ENCODE measurements at regions of chr10 and their contacts with region 1.

Region 1: DNA sequence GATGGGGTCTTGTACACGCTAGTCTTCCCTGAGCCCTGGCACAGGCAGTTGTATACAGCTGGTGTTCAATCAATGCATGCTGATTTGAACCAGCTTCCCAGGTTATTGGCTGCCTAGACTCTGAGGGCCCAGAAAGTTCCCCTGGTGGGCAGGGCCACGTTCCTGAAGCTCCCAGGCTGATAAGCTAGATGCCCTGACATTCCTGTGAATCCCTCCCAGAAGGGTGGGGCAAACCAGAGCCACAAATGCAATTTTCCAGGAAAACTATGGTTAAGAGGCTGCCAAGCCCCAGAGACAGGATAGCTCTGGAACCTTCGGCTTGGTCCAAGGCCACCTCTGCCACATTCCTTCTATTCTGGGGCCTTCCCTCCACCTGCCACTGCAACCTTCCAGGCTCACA is 78.2 kb downstream of the FAM53B start:
- DNase-seq: no peak
- H3K4me3 ChIP-seq: no peak overlapping the region
- H3K27ac ChIP-seq: no peak overlapping the region
- H3K4me1 ChIP-seq: peaks cover 0 to 7% (median 0%) of the 10 kb centered on the region in 4 experiments; a peak in 3 of 7 replicates
- H3K27me3 ChIP-seq: no peaks in the 10 kb centered on the region
- CTCF ChIP-seq: no peak
- EP300 ChIP-seq: no peak
- POLR2A ChIP-seq: no peak
- RAD21 ChIP-seq: no peak

Region 2: DNA sequence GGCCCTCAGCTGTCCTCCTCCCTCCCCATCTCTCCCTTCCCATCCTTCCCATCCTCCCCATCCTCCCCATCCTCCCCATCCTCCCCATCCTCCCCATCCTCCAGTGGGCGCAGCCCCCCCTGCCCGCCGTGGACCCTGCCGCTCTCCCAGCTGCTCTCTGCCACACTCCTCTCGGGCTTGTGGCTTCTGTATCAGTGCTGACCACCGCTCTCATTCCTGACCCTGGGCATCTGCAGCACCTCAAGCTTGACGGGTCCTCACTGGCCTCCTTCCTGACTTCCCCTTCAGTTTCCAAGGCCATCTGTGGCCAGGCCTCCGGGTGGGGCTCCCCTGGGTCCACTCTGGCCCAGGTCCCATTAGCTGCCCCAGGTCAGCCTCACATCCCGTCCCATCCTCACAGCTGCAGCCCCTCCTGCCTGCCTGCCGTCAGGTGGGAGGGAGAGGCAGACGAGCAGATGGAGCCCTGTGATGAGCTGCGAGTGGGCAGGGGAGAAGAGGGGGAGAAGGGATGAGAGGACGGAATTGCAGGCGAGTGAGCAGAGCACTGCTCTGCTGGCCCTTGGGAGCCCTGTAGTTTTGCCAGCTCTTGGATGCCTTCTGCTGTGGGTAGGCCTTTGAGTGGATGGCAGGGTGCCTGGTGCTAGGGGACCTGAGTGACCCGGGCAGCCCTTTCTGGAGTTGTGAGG is 168.6 kb before region 1 on chr10:
- CTCF ChIA-PET with region 1: no interaction called
- POLR2A ChIA-PET with region 1: no interaction called
- DNase-seq: no peak
- H3K4me3 ChIP-seq: no peak overlapping the region
- H3K27ac ChIP-seq: no peak overlapping the region
- H3K4me1 ChIP-seq: peaks cover 7 to 25% (median 15%) of the 10 kb centered on the region in 4 experiments; a peak in 6 of 7 replicates
- H3K27me3 ChIP-seq: no peaks in the 10 kb centered on the region
- CTCF ChIP-seq: no peak
- EP300 ChIP-seq: no peak
- POLR2A ChIP-seq: no peak
- RAD21 ChIP-seq: no peak

Region 3: DNA sequence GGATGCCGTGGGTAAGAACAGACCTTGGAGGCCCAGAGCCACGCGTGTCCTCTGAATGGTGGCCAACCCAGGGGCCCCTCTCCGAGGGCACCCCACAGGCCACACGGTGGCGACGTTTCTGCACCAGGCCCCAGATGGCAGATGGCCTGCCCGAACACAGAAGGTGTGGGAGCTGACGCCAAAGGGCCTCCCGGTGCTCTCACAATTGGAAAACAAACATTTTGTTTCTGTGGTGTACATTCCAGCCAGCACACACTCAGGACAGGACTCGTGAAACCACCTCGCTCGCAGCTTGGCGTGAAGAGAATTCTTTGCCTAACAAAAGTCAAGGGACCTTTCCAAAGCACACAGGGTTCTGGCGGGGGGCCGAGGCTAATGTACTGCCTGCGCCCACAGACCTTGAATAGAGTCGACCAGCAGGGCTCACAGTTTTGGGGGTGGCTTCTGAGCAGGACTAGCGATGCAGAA is 33.9 kb before region 1 on chr10:
- CTCF ChIA-PET with region 1: interaction called, 10 read pairs
- POLR2A ChIA-PET with region 1: no interaction called
- DNase-seq: no peak
- H3K4me3 ChIP-seq: no peak overlapping the region
- H3K27ac ChIP-seq: no peak overlapping the region
- H3K4me1 ChIP-seq: peaks cover 0 to 14% (median 2%) of the 10 kb centered on the region in 4 experiments; a peak in 6 of 7 replicates
- H3K27me3 ChIP-seq: no peaks in the 10 kb centered on the region; a peak in 1 of 7 replicates
- CTCF ChIP-seq: peak; percentile 61 to 68 (median 64)
- EP300 ChIP-seq: no peak
- POLR2A ChIP-seq: no peak
- RAD21 ChIP-seq: peak; percentile 72 to 81

Measured in H1 (cell line).